ENCODE measurements at regions of chr2 and their contacts with region 1.

Region 1: DNA sequence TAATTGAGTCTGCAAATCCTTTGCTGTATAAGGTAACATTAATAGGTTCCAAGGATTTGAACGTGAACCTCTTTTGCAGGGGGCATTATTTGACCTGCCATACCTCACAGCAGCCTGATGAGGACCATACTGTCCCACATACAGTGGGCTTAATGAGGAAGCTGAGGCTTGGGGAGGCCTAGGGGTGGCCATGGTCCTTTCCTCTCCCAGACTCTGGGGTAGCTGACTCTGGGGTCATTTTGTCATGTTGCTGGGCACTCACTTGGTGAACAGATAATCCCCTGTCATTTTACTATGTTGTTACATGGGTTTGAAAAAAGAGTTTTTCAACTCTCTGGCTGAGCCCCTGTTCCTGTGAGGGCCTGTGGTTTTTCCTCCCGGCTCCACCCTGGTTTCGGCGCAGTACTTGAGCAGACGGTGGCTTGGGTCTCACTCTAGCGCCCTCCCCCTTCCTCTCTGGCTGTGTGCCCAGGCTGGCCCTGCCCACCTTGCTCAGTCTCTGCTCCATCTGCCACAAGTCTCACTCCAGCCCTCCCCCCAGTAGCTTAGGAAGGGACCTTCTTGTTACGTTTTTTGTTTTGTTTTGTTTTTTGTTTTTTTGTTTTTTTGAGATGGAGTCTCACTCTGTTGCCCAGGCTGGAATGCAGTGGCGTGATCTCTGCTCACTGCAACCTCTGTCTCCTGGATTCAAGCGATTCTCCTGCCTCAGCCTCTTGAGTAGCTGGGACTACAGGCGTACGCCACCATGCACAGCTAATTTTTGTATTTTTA is 21.0 kb downstream of the INPP4A start:
- DNase-seq: peak; percentile 61 to 94 (median 90)
- ATAC-seq: peak; percentile 69
- H3K4me3 ChIP-seq: peak overlapping the region; percentile 39 to 45
- H3K4me3 Mint-ChIP-seq: peak overlapping the region; percentile 86
- H3K27ac ChIP-seq: peak overlapping the region; percentile 59 to 86
- H3K27ac Mint-ChIP-seq: peak overlapping the region; percentile 97
- H3K4me1 ChIP-seq: peaks cover 88% of the 10 kb centered on the region
- H3K4me1 Mint-ChIP-seq: peaks cover 88% of the 10 kb centered on the region
- H3K27me3 ChIP-seq: no peaks in the 10 kb centered on the region
- H3K27me3 Mint-ChIP-seq: no peaks in the 10 kb centered on the region
- CTCF ChIP-seq: no peak

Region 2: DNA sequence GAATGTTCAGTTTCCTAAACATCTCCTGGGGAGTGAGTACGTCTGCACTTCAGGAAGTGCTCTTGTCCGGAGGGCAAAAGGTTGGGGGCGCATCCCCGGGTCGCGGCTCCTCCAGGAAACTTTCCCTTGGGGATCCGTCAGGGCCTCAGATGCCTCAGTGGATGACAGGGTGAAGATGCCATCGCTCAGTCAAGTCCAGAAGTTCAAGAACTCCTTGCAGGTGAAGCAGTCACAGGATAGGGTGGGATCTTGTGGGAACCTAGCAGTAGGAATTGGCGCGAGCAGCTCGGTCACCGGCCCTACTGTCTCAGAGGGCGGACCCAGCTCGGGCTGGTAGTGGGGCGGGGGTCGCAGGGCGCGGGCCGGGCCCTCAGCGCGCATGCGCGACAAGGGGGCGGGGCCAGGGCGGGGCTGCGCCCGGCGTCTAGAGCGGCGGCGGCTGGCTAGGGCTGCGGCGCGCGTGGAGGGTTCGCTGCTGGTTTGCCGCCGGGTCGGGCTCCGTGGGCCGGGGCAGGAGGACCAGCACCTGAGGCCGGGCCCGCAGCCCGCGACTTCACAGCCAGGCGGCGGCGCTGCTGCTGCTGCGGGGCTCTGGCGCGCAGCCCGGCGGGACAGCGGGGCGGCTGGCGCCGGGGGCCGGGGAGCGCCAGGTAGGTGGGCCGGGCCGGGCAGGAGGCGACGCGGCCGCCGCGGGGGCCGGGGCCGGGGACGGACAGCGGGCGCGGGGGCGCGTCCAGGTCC is 21.0 kb before region 1 on chr2 and contains the start of gene INPP4A:
- CTCF ChIA-PET with region 1: interaction called, 47 read pairs
- POLR2A ChIA-PET with region 1: interaction called, 61 read pairs
- intact Hi-C with region 1: loop called (anchors 1 to 2 kb)
- DNase-seq: peak; percentile 61 to 91 (median 76)
- ATAC-seq: peak; percentile 67
- H3K4me3 ChIP-seq: peak within 1 kb of the TSS; percentile 77 to 89
- H3K4me3 Mint-ChIP-seq: peak within 1 kb of the TSS; percentile 98
- H3K27ac ChIP-seq: peak within 1 kb of the TSS; percentile 70 to 81
- H3K27ac Mint-ChIP-seq: peak within 1 kb of the TSS; percentile 98
- H3K4me1 ChIP-seq: peaks cover 33% of the 10 kb centered on the region
- H3K4me1 Mint-ChIP-seq: peaks cover 42% of the 10 kb centered on the region
- H3K27me3 ChIP-seq: no peaks in the 10 kb centered on the region
- H3K27me3 Mint-ChIP-seq: no peaks in the 10 kb centered on the region
- CTCF ChIP-seq: no peak
- total RNA-seq, gene INPP4A: 60.3 to 67.5 TPM

Region 3: DNA sequence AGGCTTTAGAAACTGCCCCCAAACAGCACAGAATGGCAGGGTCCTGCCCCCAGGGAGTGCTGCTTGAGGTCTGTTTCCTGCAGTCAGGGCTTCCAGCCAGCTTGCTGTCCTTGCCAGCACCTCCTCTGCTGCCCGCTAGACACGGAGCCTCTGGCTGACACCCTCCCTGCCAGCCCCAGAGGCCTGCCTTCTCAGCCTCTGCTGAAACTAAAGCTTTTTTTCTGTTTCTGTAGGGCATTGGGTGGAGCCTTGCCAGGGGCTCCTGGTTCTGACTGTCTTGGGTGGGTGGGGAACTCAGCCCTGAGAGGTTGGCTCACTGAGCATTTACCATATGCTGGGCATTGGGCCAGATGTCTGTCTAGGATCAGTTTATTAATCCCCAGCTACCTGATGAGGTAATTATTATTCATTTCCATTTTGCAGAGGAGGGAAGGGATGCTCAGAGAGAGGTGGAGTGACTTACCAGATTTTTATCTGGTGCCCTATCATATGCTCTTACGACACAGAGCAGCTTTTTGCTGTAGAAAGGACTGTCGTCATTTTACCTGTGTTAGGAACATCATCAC is 14.4 kb after region 1 on chr2:
- CTCF ChIA-PET with region 1: interaction called, 8 read pairs
- POLR2A ChIA-PET with region 1: interaction called, 52 read pairs
- intact Hi-C with region 1: loop called (anchors 2 kb)
- DNase-seq: peak in 4 of 9 experiments; percentile 55 to 63 (median 58)
- ATAC-seq: peak; percentile 72
- H3K4me3 ChIP-seq: no peak overlapping the region
- H3K4me3 Mint-ChIP-seq: peak overlapping the region; percentile 53
- H3K27ac ChIP-seq: peak overlapping the region; percentile 29 to 68
- H3K27ac Mint-ChIP-seq: peak overlapping the region; percentile 89
- H3K4me1 ChIP-seq: peaks cover 99% of the 10 kb centered on the region
- H3K4me1 Mint-ChIP-seq: peaks cover 98% of the 10 kb centered on the region
- H3K27me3 ChIP-seq: no peaks in the 10 kb centered on the region
- H3K27me3 Mint-ChIP-seq: no peaks in the 10 kb centered on the region
- CTCF ChIP-seq: no peak

Region 4: DNA sequence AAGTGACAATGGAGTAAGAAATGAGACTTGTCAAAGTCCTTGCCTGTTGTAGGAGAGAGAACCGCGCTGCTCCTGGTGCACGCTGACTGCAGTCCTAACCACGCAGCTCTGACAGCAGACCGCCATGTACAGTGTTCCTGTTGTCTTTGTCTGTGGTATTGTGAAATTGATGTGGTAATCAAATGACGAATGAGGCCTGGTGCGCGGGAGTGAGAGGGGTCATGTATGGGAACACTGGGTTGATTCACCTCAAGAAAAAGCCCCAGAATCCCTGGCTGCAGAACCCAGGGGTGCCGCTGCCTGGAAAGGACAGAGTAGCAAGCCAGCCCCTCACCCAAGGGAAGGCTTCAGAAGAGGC is 43.0 kb after region 1 on chr2:
- CTCF ChIA-PET with region 1: interaction called, 6 read pairs
- POLR2A ChIA-PET with region 1: interaction called, 5 read pairs
- intact Hi-C with region 1: loop called in 1 of 2 experiments (anchors 5 kb)
- DNase-seq: peak in 8 of 9 experiments; percentile 21 to 83 (median 56)
- ATAC-seq: peak; percentile 88
- H3K4me3 ChIP-seq: no peak overlapping the region
- H3K4me3 Mint-ChIP-seq: peak overlapping the region; percentile 35
- H3K27ac ChIP-seq: no peak overlapping the region
- H3K27ac Mint-ChIP-seq: peak overlapping the region; percentile 85
- H3K4me1 ChIP-seq: peaks cover 83% of the 10 kb centered on the region
- H3K4me1 Mint-ChIP-seq: peaks cover 97% of the 10 kb centered on the region
- H3K27me3 ChIP-seq: no peaks in the 10 kb centered on the region
- H3K27me3 Mint-ChIP-seq: no peaks in the 10 kb centered on the region
- CTCF ChIP-seq: no peak

Region 5: DNA sequence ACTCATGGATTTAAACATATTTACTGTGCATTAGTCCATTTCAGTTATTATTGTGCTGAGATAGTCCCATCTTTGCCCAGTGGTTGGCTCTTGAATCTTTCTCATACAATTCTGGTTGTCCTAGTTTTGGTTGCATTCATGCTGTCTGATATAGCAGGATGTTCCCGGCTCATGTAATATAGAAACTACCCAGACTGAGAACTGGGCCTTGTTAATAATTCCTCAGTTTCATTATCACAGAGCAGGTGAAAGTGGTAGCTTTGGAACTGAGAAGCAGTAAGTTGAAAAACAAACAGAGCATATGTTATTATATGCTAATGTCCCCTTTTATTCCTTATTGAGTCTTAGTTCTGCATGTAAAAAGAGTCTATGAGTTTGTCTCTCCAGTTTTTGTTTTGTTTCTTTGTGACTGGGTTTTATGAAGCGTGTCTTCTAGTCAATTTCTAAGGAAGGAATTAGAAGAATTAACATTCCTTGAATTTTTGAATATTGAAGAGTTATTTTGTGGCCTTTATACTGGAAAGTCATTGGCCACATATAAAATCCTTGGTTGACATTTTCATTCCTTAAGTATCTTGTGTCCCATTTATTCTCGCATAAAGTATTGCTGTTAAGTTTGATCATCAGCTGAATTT is 914.9 kb after region 1 on chr2:
- CTCF ChIA-PET with region 1: no interaction called
- POLR2A ChIA-PET with region 1: no interaction called
- intact Hi-C with region 1: no loop called
- DNase-seq: no peak
- ATAC-seq: no peak
- H3K4me3 ChIP-seq: no peak overlapping the region
- H3K4me3 Mint-ChIP-seq: no peak overlapping the region
- H3K27ac ChIP-seq: no peak overlapping the region
- H3K27ac Mint-ChIP-seq: no peak overlapping the region
- H3K4me1 ChIP-seq: no peaks in the 10 kb centered on the region
- H3K4me1 Mint-ChIP-seq: no peaks in the 10 kb centered on the region
- H3K27me3 ChIP-seq: no peaks in the 10 kb centered on the region
- H3K27me3 Mint-ChIP-seq: no peaks in the 10 kb centered on the region
- CTCF ChIP-seq: no peak